ENCODE measurements at regions of chr6 and their contacts with region 1.

Region 1: GRCh38 chr6:2693231-2693630 is 57.5 kb downstream of the MYLK4 start:
- DNase-seq: no peak
- H3K4me3 ChIP-seq: no peak overlapping the region
- H3K27ac ChIP-seq: no peak overlapping the region
- H3K4me1 ChIP-seq: no peaks in the 10 kb centered on the region
- H3K27me3 ChIP-seq: no peaks in the 10 kb centered on the region
- CTCF ChIP-seq: no peak
- EP300 ChIP-seq: no peak
- POLR2A ChIP-seq: no peak

Region 2: DNA sequence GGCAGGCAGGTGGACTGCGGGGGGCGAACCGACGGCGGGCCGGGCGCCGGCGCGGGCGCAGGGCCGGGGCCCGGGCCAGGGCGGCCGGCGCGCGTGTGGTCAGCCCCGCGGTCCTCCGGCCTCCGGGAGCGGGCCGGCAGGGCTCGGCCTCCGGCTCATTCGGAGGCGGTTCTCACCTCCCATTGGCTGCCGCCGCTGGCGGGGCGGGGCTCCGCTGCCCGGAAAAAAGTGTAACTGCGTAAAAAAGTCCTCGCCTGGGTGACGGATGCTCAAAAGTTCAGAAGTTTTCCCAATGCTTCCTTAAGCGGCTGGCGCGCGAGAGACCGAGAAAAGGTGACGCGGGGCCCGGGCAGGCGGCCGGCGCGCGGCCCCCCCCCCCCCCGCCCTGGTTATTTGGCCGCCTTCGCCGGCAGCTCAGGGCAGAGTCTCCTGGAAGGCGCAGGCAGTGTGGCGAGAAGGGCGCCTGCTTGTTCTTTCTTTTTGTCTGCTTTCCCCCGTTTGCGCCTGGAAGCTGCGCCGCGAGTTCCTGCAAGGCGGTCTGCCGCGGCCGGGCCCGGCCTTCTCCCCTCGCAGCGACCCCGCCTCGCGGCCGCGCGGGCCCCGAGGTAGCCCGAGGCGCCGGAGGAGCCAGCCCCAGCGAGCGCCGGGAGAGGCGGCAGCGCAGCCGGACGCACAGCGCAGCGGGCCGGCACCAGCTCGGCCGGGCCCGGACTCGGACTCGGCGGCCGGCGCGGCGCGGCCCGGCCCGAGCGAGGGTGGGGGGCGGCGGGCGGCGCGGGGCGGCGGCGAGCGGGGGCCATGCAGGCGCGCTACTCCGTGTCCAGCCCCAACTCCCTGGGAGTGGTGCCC is 1083.4 kb before region 1 on chr6 and contains the start of gene FOXC1:
- intact Hi-C with region 1: loop called (anchors 5 kb)
- DNase-seq: peak; percentile 97
- H3K4me3 ChIP-seq: peak within 1 kb of the TSS; percentile 67 to 88 (median 76)
- H3K27ac ChIP-seq: peak within 1 kb of the TSS; percentile 90 to 98 (median 96)
- H3K4me1 ChIP-seq: peaks cover 15 to 74% (median 65%) of the 10 kb centered on the region in 4 donors
- H3K27me3 ChIP-seq: peaks cover 4 to 84% (median 42%) of the 10 kb centered on the region in 4 donors
- CTCF ChIP-seq: no peak
- EP300 ChIP-seq: no peak
- POLR2A ChIP-seq: no peak
- total RNA-seq, gene FOXC1: 8.7 to 19.7 (median 16.8) TPM

Region 3: GRCh38 chr6:3090013-3090412 is 396.8 kb after region 1 on chr6:
- intact Hi-C with region 1: no loop called
- DNase-seq: no peak
- H3K4me3 ChIP-seq: no peak overlapping the region
- H3K27ac ChIP-seq: no peak overlapping the region
- H3K4me1 ChIP-seq: peaks cover 0 to 4% (median 0%) of the 10 kb centered on the region in 4 donors
- H3K27me3 ChIP-seq: no peaks in the 10 kb centered on the region
- CTCF ChIP-seq: no peak
- EP300 ChIP-seq: no peak
- POLR2A ChIP-seq: no peak